A673 (cell line): ENCODE measurements at regions of chr4 and their contacts with region 1.

Region 1: GRCh38 chr4:158729716-158730559 is 6.7 kb upstream of the PPID start:
- DNase-seq: peak; percentile 82
- H3K4me3 ChIP-seq: no peak overlapping the region
- H3K27ac ChIP-seq: no peak overlapping the region
- H3K4me1 ChIP-seq: no peaks in the 10 kb centered on the region
- H3K27me3 ChIP-seq: peaks cover 22% of the 10 kb centered on the region
- CTCF ChIP-seq: peak; percentile 90

Region 2: GRCh38 chr4:158850800-158851644 is 121.1 kb after region 1 on chr4:
- CTCF ChIA-PET with region 1: no interaction called
- POLR2A ChIA-PET with region 1: no interaction called
- intact Hi-C with region 1: loop called (anchors 1 kb)
- DNase-seq: peak; percentile 56
- H3K4me3 ChIP-seq: no peak overlapping the region
- H3K27ac ChIP-seq: no peak overlapping the region
- H3K4me1 ChIP-seq: no peaks in the 10 kb centered on the region
- H3K27me3 ChIP-seq: no peaks in the 10 kb centered on the region
- CTCF ChIP-seq: peak; percentile 87

Region 3: GRCh38 chr4:159206427-159206871 is 476.5 kb after region 1 on chr4:
- CTCF ChIA-PET with region 1: no interaction called
- POLR2A ChIA-PET with region 1: no interaction called
- intact Hi-C with region 1: loop called (anchors 1 kb)
- DNase-seq: no peak
- H3K4me3 ChIP-seq: no peak overlapping the region
- H3K27ac ChIP-seq: no peak overlapping the region
- H3K4me1 ChIP-seq: no peaks in the 10 kb centered on the region
- H3K27me3 ChIP-seq: no peaks in the 10 kb centered on the region
- CTCF ChIP-seq: no peak

Region 4: DNA sequence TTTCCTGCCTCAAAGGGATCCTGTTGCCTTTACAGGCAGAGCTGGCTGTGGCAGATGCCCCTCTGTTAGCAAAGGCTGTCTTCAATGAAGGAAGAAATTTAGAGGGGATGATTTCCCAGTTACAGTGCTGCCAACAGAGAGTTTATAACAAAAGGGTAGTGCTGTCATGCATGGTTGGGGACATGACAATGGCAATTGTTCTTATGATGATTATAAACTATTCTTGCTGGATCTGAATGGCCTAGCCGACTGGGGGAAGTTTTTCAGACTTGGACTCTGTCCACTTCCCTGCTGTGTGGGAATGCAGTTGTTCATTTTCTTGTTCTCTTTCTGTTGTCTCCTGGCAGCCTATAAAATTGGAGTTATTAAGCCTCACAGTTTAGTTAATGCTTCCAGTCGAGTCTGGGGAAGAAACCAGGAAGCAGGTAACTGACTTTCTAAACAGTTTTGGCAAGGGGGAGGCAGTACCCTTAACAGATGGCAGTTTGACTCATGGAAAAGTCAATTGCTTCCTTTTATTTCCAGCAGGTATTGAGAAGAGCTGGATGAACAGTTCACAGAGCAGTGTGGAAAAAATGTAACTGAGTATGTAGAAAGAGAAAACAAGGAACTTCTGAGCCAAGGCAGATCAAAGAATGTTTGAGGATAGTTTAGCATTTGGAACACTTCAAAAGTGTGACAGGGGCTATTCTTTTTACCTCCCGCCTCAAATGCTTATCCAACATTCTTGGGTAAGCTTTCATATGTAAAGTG is 955.6 kb after region 1 on chr4:
- CTCF ChIA-PET with region 1: no interaction called
- POLR2A ChIA-PET with region 1: no interaction called
- intact Hi-C with region 1: no loop called
- DNase-seq: peak; percentile 88
- H3K4me3 ChIP-seq: no peak overlapping the region
- H3K27ac ChIP-seq: no peak overlapping the region
- H3K4me1 ChIP-seq: peaks cover 27% of the 10 kb centered on the region
- H3K27me3 ChIP-seq: peaks cover 20% of the 10 kb centered on the region
- CTCF ChIP-seq: no peak